ENCODE measurements at regions of chr2 and their contacts with region 1.

Region 1: DNA sequence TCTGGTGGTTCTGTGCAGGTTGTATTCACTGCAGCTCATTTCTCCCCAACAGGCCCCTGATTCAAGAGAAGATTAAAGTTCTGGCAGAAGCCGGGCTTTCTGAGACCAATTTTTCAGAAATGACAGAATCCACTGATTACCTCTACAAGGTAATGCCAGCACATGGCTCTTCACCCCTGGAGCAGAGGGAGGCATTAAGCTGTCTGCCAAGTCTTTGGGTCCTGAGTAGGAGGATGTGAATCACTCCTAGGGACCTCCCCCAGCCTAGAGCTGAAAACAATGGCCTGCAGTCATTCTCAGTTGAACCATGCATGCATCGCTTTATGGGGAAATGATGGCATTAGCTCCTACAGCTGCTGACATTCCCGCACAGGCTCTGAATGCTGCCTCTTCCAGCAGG is 20.5 kb upstream of the RPL37A start:
- DNase-seq: peak; percentile 68
- H3K4me3 Mint-ChIP-seq: no peak overlapping the region
- H3K27ac Mint-ChIP-seq: no peak overlapping the region
- H3K4me1 Mint-ChIP-seq: peaks cover 23% of the 10 kb centered on the region
- H3K27me3 Mint-ChIP-seq: no peaks in the 10 kb centered on the region

Region 2: DNA sequence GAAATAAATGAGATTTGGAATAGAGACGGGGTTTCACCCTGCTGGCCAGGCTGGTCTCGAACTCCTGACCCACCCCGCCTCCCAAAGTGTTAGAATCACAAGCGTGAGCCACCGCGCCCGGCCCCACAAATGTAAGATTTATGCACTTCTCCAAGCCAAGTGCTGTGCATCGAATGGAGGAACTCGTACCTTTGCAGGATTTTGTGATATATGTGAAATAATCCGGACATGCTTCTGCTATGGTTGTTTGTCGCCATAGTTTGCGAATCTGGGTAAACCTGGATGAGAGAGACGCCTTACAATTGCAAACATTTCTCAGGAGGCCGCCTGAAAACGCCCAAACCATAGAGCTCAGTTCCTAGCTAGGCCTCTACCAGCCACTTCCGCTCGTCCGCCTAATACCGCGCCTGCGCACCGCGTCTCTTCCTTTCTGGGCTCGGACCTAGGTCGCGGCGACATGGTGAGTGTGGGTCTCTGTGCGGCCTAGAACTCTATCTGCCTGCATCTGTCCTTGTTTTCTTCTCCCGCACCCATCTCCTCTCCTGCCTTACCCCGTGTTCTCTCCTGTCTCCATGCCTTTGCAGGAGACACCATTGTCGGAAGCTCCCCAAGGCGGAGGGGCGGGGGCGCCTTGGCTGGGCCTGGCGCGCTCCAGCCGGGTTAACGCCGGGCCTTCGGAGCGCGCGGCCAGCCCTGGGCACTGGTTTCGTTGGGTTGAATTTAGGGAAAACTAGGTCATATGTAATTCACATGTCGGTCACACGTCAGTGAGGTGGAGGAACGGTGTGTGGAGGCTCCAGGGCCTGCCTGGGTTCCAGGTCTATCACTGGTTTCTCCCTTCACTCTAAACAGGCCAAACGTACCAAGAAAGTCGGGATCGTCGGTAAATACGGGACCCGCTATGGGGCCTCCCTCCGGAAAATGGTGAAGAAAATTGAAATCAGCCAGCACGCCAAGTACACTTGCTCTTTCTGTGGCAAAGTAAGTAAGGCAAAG is 20.6 kb after region 1 on chr2 and contains the start of gene RPL37A:
- CTCF ChIA-PET with region 1: interaction called, 4 read pairs
- intact Hi-C with region 1: loop called (anchors 1 kb)
- DNase-seq: peak; percentile 93
- H3K4me3 Mint-ChIP-seq: peak within 1 kb of the TSS; percentile 94
- H3K27ac Mint-ChIP-seq: peak within 1 kb of the TSS; percentile 94
- H3K4me1 Mint-ChIP-seq: peaks cover 51% of the 10 kb centered on the region
- H3K27me3 Mint-ChIP-seq: no peaks in the 10 kb centered on the region
- total RNA-seq, gene RPL37A: 4,869 to 4,871 TPM